Head of caudate nucleus (tissue), 42 donors: ENCODE measurements at regions of chr21 and their contacts with region 1.

Region 1: GRCh38 chr21:26850108-26850643 is 5.0 kb upstream of the ADAMTS1 start:
- DNase-seq: no peak

Region 2: GRCh38 chr21:27564684-27565301 is 714.6 kb after region 1 on chr21:
- intact Hi-C with region 1: loop called (anchors 5 kb)
- DNase-seq: peak; percentile 9 to 80 (median 54)